GM23248 (cell line): ENCODE measurements at regions of chr10 and their contacts with region 1.

Region 1: DNA sequence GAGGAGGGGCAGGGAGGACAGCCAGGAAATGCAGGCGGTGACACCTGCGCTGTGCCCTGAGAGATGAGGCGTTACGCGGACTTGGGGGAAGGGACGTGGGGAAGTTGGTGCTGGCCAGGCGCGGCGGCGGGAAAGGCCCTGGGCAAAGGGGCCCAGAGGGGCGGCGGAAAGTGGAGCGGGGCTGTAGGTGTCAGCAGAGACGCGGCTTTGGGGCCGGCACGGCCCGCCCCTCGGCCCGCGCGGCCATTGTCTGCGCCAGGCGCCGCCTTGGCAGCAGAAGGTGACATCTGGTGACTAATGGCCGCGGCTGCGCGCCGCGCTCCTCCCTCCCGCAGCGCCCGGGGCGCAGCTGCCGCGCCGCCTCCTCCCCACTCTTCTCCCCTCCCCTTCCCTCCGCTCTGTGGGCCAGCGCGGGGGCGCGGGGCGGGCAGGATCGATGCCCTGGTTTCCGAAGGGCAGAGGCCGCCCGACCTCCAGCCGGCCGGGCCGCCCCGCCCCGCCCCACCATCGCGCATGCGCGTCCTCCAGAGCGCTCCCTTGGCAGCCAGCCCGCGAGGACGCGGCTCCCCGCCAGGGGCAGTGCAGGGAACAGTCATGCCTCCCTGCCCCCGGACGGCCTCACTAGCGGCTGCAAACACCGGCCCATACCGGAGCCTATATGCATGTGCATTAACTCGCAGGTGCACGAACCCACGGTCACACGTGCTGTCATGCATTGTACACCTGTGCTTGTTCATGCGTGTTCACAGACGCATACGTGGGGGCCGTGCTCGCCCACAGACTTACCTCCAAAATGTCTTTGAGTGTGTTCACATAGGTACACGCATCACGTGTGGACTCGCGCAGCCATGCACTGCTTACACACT is 269.6 kb downstream of the RPS24 start:
- DNase-seq: peak; percentile 93
- H3K4me3 ChIP-seq: peak overlapping the region; percentile 71
- H3K27ac ChIP-seq: peak overlapping the region; percentile 23
- H3K4me1 ChIP-seq: 0 out of 2 replicates have a peak, but pooled peaks cover 4% of the 10 kb centered on the region
- H3K27me3 ChIP-seq: no peaks in the 10 kb centered on the region

Region 2: DNA sequence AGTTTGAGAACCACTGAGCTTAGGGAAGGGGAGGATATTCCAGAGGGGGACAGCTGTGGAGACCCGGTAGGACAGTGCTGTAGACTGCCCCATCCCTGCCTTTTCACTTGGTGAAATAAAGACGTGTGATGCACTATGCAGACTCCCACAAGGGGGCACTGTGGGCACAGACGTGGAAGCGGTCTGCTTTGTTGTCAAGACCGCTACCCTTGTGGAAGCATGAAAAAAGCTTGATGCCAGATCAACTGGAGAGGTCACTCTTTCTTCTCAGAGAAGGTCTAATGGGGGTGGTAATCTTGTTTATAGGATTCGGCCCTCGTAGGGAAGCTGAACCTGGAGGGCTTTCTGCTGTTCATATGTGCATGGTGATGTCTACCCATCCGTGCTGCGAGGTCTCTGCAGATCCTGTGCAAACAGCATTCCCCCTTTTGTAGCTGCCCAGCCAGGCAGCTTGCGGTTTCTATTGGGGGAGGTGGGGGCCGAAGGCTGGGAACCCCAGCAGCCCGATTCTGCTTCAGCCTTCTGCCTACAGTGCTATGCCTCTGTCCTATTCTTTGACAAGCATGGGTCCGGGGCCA is 255.8 kb before region 1 on chr10:
- in situ Hi-C with region 1: loop called (anchors 10 kb)
- DNase-seq: peak; percentile 87
- H3K4me3 ChIP-seq: no peak overlapping the region
- H3K27ac ChIP-seq: no peak overlapping the region
- H3K4me1 ChIP-seq: peaks cover 24% of the 10 kb centered on the region
- H3K27me3 ChIP-seq: no peaks in the 10 kb centered on the region

Region 3: DNA sequence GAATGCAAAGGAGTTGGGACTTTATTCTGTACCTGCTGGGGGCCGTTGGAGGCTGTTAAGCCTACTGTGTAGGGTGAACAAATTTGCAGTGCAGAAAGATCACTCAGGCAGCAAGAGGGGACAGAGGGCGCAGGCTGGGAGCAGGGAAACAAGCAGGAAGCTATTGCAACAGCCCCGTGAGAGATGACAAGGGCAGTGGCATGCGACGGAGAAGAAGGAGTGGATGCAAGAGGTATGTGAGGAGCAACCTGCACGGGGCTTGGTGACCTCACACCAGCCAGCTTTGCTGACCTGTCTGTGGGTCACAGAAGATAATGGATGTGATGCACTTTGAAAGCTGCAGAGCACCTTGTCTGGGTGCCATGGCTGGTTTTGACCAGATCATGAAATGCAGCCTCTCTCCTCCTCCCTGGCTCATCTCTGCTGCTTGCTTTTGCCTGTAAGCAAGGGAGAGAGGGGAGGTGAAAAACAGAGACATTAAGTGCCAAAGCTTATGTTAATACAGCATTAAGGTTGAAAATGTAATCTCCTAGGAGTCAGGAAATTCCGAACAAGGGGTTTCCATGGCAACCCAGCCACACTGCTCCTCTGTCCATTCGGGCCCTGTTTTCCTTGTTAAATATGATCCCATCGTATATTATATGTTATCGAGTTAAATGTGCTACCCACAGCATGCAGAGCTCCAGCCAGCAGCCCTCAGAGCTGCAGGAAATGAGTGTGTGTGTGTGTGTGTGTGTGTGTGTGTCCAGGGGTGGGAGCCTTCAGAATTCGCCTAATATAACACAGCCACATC is 451.2 kb after region 1 on chr10:
- in situ Hi-C with region 1: no loop called
- DNase-seq: peak; percentile 47
- H3K4me3 ChIP-seq: no peak overlapping the region
- H3K27ac ChIP-seq: no peak overlapping the region
- H3K4me1 ChIP-seq: peaks cover 23% of the 10 kb centered on the region
- H3K27me3 ChIP-seq: no peaks in the 10 kb centered on the region